ENCODE measurements at regions of chr5 and their contacts with region 1.

Region 1: GRCh38 chr5:73902327-73903051 is 276.5 kb downstream of the ARHGEF28 start:
- DNase-seq: peak in 4 of 10 donors; percentile 18 to 51 (median 36)
- H3K4me3 ChIP-seq: peak overlapping the region in 6 of 59 donors; percentile 6 to 26 (median 14)
- H3K27ac ChIP-seq: peak overlapping the region in 2 of 59 donors; percentile 8 to 35
- H3K27me3 ChIP-seq: no peaks in the 10 kb centered on the region
- CTCF ChIP-seq: peak; percentile 86 to 99 (median 94)

Region 2: GRCh38 chr5:73284127-73284795 is 618.2 kb before region 1 on chr5:
- intact Hi-C with region 1: no loop called
- DNase-seq: peak in 1 of 10 donors; percentile 44
- H3K4me3 ChIP-seq: no peak overlapping the region
- H3K27ac ChIP-seq: no peak overlapping the region
- H3K27me3 ChIP-seq: peaks cover 0 to 54% (median 13%) of the 10 kb centered on the region in 45 donors
- CTCF ChIP-seq: no peak

Region 3: GRCh38 chr5:74648835-74649293 is 746.4 kb after region 1 on chr5:
- intact Hi-C with region 1: loop called (anchors 2 kb)
- DNase-seq: no peak
- H3K4me3 ChIP-seq: peak overlapping the region in 18 of 59 donors; percentile 2 to 49 (median 28)
- H3K27ac ChIP-seq: no peak overlapping the region
- H3K27me3 ChIP-seq: no peaks in the 10 kb centered on the region
- CTCF ChIP-seq: peak; percentile 63 to 94 (median 84)

Measured in dorsolateral prefrontal cortex (tissue), 120 donors.